ENCODE measurements at regions of chr11 and their contacts with region 1.

Region 1: GRCh38 chr11:27362749-27363575 is at the start of gene CCDC34:
- DNase-seq: peak; percentile 69 to 98 (median 84)

Region 2: GRCh38 chr11:27472398-27473016 is 109.5 kb after region 1 on chr11 and contains the start of gene LGR4:
- intact Hi-C with region 1: loop called (anchors 5 kb)
- DNase-seq: peak; percentile 81 to 99 (median 92)